CD4-positive, alpha-beta memory T cell (primary cell): ENCODE measurements at regions of chr3 and their contacts with region 1.

Region 1: DNA sequence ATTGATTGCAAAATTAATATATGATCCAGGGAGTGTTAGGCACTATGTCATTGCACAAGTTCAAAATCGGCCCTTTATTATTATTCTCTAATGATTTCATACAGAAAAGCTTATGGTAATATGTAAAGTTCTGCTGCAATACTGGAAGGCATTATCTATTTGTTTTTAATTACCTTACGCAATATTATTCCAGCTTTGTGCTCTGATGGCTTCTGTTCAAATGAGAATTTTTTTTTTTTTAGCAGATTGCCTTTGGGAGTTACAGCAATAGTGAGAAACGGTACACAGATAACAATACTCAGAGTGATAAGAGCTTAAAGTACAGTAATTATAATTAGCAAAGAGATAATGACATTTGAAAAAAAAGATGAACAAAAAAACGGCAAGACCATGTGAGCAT is 602.2 kb upstream of the ALCAM start:
- DNase-seq: no peak
- H3K4me3 ChIP-seq: no peak overlapping the region
- H3K4me3 Mint-ChIP-seq: no peak overlapping the region
- H3K27ac ChIP-seq: no peak overlapping the region
- H3K27ac Mint-ChIP-seq: no peak overlapping the region
- H3K4me1 ChIP-seq: no peaks in the 10 kb centered on the region
- H3K4me1 Mint-ChIP-seq: no peaks in the 10 kb centered on the region
- H3K27me3 ChIP-seq: no peaks in the 10 kb centered on the region
- H3K27me3 Mint-ChIP-seq: no peaks in the 10 kb centered on the region

Region 2: DNA sequence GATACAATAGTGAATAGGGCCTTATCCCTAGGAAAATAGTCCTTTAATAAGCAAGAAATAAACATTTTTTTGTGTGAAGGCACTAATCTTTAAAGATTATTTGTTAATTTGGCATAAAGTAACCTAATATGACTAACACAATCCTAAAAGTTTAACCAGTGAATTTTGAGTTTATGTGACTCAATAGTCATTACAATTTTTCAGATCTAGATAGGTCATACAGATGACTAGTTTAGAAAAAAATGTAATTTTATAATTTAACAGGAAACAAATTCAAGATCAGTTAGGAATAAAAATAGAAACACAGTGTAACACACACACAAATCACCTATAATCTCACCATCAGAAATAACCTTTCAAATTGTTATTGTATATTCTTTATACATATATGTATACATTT is 18.4 kb before region 1 on chr3:
- CTCF ChIA-PET with region 1: no interaction called
- POLR2A ChIA-PET with region 1: no interaction called
- intact Hi-C with region 1: loop called (anchors 1 kb)
- DNase-seq: no peak
- H3K4me3 ChIP-seq: no peak overlapping the region
- H3K4me3 Mint-ChIP-seq: no peak overlapping the region
- H3K27ac ChIP-seq: no peak overlapping the region
- H3K27ac Mint-ChIP-seq: no peak overlapping the region
- H3K4me1 ChIP-seq: no peaks in the 10 kb centered on the region
- H3K4me1 Mint-ChIP-seq: no peaks in the 10 kb centered on the region
- H3K27me3 ChIP-seq: no peaks in the 10 kb centered on the region
- H3K27me3 Mint-ChIP-seq: no peaks in the 10 kb centered on the region